ENCODE measurements at regions of chr16 and their contacts with region 1.

Region 1: GRCh38 chr16:78770353-78771091 is 671.1 kb downstream of the WWOX start:
- DNase-seq: peak; percentile 80 to 90
- ATAC-seq: peak; percentile 85 to 98 (median 97)
- H3K4me3 ChIP-seq: no peak overlapping the region
- H3K4me3 Mint-ChIP-seq: no peak overlapping the region
- H3K27ac ChIP-seq: no peak overlapping the region
- H3K27ac Mint-ChIP-seq: no peak overlapping the region
- H3K4me1 ChIP-seq: peaks cover 23% of the 10 kb centered on the region
- H3K4me1 Mint-ChIP-seq: peaks cover 15 to 22% of the 10 kb centered on the region in 2 donors
- H3K27me3 ChIP-seq: no peaks in the 10 kb centered on the region
- H3K27me3 Mint-ChIP-seq: peaks cover 28 to 46% of the 10 kb centered on the region in 2 donors
- CTCF ChIP-seq: peak; percentile 97

Region 2: GRCh38 chr16:78503602-78504001 is 266.9 kb before region 1 on chr16:
- intact Hi-C with region 1: loop called (anchors 1 kb)
- DNase-seq: peak in 1 of 2 donors; percentile 76
- ATAC-seq: peak in 2 of 3 donors; percentile 52 to 58
- H3K4me3 ChIP-seq: no peak overlapping the region
- H3K4me3 Mint-ChIP-seq: no peak overlapping the region
- H3K27ac ChIP-seq: no peak overlapping the region
- H3K27ac Mint-ChIP-seq: no peak overlapping the region
- H3K4me1 ChIP-seq: no peaks in the 10 kb centered on the region
- H3K4me1 Mint-ChIP-seq: no peaks in the 10 kb centered on the region
- H3K27me3 ChIP-seq: no peaks in the 10 kb centered on the region
- H3K27me3 Mint-ChIP-seq: no peaks in the 10 kb centered on the region
- CTCF ChIP-seq: peak; percentile 86

Region 3: DNA sequence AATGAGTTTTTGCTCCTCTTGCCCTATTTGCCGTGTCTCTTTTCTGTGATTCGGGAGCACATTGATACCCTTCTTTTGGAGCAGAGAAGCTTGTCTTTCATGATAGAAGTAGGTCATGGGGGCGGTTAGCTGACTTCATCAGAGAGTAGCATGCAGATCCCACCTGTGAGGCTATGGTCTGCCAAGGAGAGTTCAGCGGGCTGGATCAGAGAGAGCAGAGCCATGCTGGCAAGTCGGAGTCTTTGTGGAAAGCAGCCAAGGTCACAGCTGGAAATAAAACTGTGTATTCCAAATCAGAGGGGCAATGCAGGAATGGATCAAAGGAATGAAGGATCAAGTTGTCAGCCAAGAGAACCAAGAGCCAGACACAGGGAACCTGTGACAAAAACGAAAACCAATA is 75.1 kb before region 1 on chr16:
- intact Hi-C with region 1: no loop called
- DNase-seq: no peak
- ATAC-seq: no peak
- H3K4me3 ChIP-seq: no peak overlapping the region
- H3K4me3 Mint-ChIP-seq: no peak overlapping the region
- H3K27ac ChIP-seq: no peak overlapping the region
- H3K27ac Mint-ChIP-seq: no peak overlapping the region
- H3K4me1 ChIP-seq: no peaks in the 10 kb centered on the region
- H3K4me1 Mint-ChIP-seq: no peaks in the 10 kb centered on the region
- H3K27me3 ChIP-seq: no peaks in the 10 kb centered on the region
- H3K27me3 Mint-ChIP-seq: no peaks in the 10 kb centered on the region
- CTCF ChIP-seq: no peak

Measured in natural killer cell (primary cell).